GM12878 (cell line): ENCODE measurements at regions of chr1 and their contacts with region 1.

Region 1: GRCh38 chr1:243748706-243749283 is 101.2 kb downstream of the AKT3 start:
- DNase-seq: peak; percentile 28
- ATAC-seq: peak; percentile 99
- H3K4me3 ChIP-seq: no peak overlapping the region
- H3K27ac ChIP-seq: no peak overlapping the region
- H3K4me1 ChIP-seq: no peaks in the 10 kb centered on the region
- H3K27me3 ChIP-seq: no peaks in the 10 kb centered on the region; a peak in 1 of 4 replicates
- CTCF ChIP-seq: peak; percentile 71 to 75 (median 73)
- EP300 ChIP-seq: no peak
- POLR2A ChIP-seq: no peak
- RAD21 ChIP-seq: peak; percentile 90

Region 2: GRCh38 chr1:243409284-243409683 is 339.5 kb before region 1 on chr1:
- CTCF ChIA-PET with region 1: interaction called, 4 read pairs
- POLR2A ChIA-PET with region 1: no interaction called
- RAD21 ChIA-PET with region 1: no interaction called
- SMC1A ChIA-PET with region 1: no interaction called
- in situ Hi-C with region 1: no loop called
- intact Hi-C with region 1: loop called (anchors 5 kb)
- DNase-seq: no peak
- ATAC-seq: peak; percentile 50; the same call in 2 of the 3 replicates
- H3K4me3 ChIP-seq: no peak overlapping the region
- H3K27ac ChIP-seq: no peak overlapping the region
- H3K4me1 ChIP-seq: peaks cover 8% of the 10 kb centered on the region; the same call in 1 of the 2 replicates
- H3K27me3 ChIP-seq: no peaks in the 10 kb centered on the region
- CTCF ChIP-seq: peak; percentile 14 to 42 (median 36); a peak in 4 of 6 replicates
- EP300 ChIP-seq: no peak
- POLR2A ChIP-seq: no peak
- RAD21 ChIP-seq: peak; percentile 54

Region 3: GRCh38 chr1:243708210-243708609 is 40.6 kb before region 1 on chr1:
- CTCF ChIA-PET with region 1: interaction called, 32 read pairs
- POLR2A ChIA-PET with region 1: no interaction called
- RAD21 ChIA-PET with region 1: interaction called, 36 read pairs
- SMC1A ChIA-PET with region 1: interaction called, 30 read pairs
- in situ Hi-C with region 1: no loop called
- intact Hi-C with region 1: loop called (anchors 1 kb)
- DNase-seq: no peak
- ATAC-seq: no peak
- H3K4me3 ChIP-seq: no peak overlapping the region
- H3K27ac ChIP-seq: no peak overlapping the region
- H3K4me1 ChIP-seq: no peaks in the 10 kb centered on the region
- H3K27me3 ChIP-seq: no peaks in the 10 kb centered on the region
- CTCF ChIP-seq: peak in 1 of 3 experiments; percentile 28; a peak in 2 of 6 replicates
- EP300 ChIP-seq: no peak
- POLR2A ChIP-seq: no peak
- RAD21 ChIP-seq: peak; percentile 57

Region 4: GRCh38 chr1:243727503-243728203 is 21.1 kb before region 1 on chr1:
- CTCF ChIA-PET with region 1: interaction called, 7 read pairs
- POLR2A ChIA-PET with region 1: no interaction called
- RAD21 ChIA-PET with region 1: interaction called, 5 read pairs
- SMC1A ChIA-PET with region 1: interaction called, 17 read pairs
- in situ Hi-C with region 1: no loop called
- intact Hi-C with region 1: no loop called
- DNase-seq: peak; percentile 66
- ATAC-seq: peak; percentile 90
- H3K4me3 ChIP-seq: peak overlapping the region; percentile 29; the same call in 1 of the 2 replicates
- H3K27ac ChIP-seq: peak overlapping the region; percentile 74
- H3K4me1 ChIP-seq: peaks cover 42% of the 10 kb centered on the region
- H3K27me3 ChIP-seq: no peaks in the 10 kb centered on the region
- CTCF ChIP-seq: no peak
- EP300 ChIP-seq: peak; percentile 74 to 78; a peak in 3 of 4 replicates
- POLR2A ChIP-seq: no peak
- RAD21 ChIP-seq: no peak

Region 5: DNA sequence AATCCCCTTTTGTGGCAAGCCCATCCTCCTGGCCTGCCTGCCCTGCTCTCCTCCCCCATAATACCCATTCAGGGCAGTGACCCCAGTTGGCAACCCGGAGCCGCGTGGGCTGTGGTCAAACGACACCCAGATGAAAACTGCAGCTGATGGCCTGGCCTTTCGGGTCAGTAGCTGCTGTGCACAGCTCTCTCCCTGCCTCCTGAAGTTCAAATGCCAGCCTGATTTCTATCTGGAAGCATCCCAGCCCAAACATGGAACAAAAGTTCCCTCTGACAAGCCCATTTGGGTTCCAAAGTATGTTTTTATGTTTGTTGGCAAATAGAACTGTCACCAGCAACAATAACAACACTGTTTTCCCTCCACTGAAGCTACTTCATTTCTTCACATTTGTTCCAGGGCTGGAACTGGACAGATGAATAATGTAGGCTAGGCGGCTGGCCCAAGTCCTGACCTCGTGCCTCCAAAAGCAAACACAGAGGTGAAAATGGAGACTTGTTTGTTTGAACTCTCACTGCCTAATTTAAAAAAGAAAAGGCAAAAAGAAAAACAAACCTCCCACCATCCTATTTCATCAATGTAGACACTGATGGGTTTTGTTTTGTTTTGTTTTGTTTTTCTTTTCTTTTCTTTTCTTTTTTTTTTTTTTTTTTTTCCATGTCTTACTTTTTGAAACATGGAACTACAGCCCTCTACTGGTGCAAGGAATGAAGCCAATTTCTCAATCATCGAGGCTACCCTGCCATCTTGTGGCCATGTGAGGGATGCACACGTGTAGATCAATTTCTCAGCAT is 523.9 kb after region 1 on chr1:
- CTCF ChIA-PET with region 1: interaction called, 6 read pairs
- POLR2A ChIA-PET with region 1: no interaction called
- RAD21 ChIA-PET with region 1: no interaction called
- SMC1A ChIA-PET with region 1: interaction called, 3 read pairs
- in situ Hi-C with region 1: no loop called
- intact Hi-C with region 1: loop called (anchors 2 kb)
- DNase-seq: peak; percentile 69
- ATAC-seq: peak; percentile 94
- H3K4me3 ChIP-seq: no peak overlapping the region
- H3K27ac ChIP-seq: no peak overlapping the region
- H3K4me1 ChIP-seq: no peaks in the 10 kb centered on the region
- H3K27me3 ChIP-seq: no peaks in the 10 kb centered on the region
- CTCF ChIP-seq: peak; percentile 88 to 99 (median 99); a peak in 5 of 6 replicates
- EP300 ChIP-seq: no peak
- POLR2A ChIP-seq: no peak
- RAD21 ChIP-seq: peak; percentile 100